Activated T-helper 1 cell treated with anti-CD3 and anti-CD28 coated beads, Interleukin-12 subunit alpha, Interleukin-12 subunit beta, Interleukin-2, Interleukin-4 antibody, amounts not matched to agents 30 ng/mL and 10 ng/mL and 1 ng/mL, durations not matched to agents 14 hours and 24 hours and 36 hours (primary cell): ENCODE measurements at regions of chr7 and their contacts with region 1.

Region 1: GRCh38 chr7:28298870-28299518 is 113.3 kb upstream of the CREB5 start:
- DNase-seq: no peak
- H3K4me3 Mint-ChIP-seq: no peak overlapping the region
- H3K27ac Mint-ChIP-seq: no peak overlapping the region
- H3K4me1 Mint-ChIP-seq: no peaks in the 10 kb centered on the region
- H3K27me3 Mint-ChIP-seq: peaks cover 17% of the 10 kb centered on the region

Region 2: GRCh38 chr7:28626624-28627262 is 327.7 kb after region 1 on chr7:
- intact Hi-C with region 1: loop called (anchors 5 kb)
- DNase-seq: no peak
- H3K4me3 Mint-ChIP-seq: no peak overlapping the region
- H3K27ac Mint-ChIP-seq: no peak overlapping the region
- H3K4me1 Mint-ChIP-seq: no peaks in the 10 kb centered on the region
- H3K27me3 Mint-ChIP-seq: peaks cover 6% of the 10 kb centered on the region

Region 3: GRCh38 chr7:28708033-28708951 is 409.3 kb after region 1 on chr7:
- intact Hi-C with region 1: no loop called
- DNase-seq: no peak
- H3K4me3 Mint-ChIP-seq: no peak overlapping the region
- H3K27ac Mint-ChIP-seq: no peak overlapping the region
- H3K4me1 Mint-ChIP-seq: no peaks in the 10 kb centered on the region
- H3K27me3 Mint-ChIP-seq: no peaks in the 10 kb centered on the region

Region 4: DNA sequence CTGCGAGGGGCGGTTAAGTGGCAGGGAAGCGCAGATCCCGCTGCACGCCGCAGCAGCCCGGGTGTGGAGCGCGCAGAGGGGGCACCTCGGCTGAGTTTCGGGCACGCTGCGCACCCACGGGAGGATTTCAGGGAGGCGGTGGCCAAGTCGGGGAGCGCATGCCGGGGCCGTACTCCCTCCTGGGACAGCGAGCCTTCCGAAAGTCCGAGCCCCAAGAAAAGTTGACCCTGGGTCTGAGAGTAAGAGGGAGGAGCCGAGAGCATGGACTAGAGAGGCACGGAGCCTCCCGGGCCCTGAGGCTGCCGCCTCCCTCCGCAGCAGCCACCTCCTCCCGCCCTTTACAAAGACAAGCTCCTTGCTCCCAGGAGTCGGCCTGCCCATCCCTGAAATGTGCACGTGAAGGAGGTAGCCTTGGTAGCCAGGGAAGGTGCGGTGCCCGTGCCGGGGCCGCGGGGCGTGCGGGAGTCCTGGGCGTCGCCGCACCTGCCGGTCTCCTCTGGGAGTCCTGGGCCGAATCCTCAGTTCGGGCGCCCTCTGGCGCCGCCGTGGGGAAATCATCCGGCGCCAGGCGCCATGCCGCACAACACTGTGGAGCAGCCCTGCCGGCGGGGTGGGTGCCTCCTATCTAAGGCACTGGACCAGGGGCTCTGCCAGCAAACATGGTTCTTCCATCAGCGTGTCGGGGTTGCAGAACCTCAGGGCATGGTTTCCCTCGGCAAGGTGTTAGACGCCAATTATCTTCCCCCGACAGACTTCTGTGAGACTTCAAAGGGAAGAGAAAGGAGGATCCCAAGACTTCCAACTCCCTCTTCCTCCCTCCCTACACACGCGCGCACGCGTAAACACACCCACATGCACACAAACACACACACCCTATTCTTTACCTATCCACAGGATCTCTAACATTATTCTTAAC is 555.1 kb after region 1 on chr7:
- intact Hi-C with region 1: loop called (anchors 2 kb)
- DNase-seq: peak; percentile 49
- H3K4me3 Mint-ChIP-seq: peak overlapping the region; percentile 66
- H3K27ac Mint-ChIP-seq: no peak overlapping the region
- H3K4me1 Mint-ChIP-seq: peaks cover 7% of the 10 kb centered on the region
- H3K27me3 Mint-ChIP-seq: peaks cover 40% of the 10 kb centered on the region